Activated B cell treated with CpG ODN at 0.5 μM for 24 hours (primary cell): ENCODE measurements at regions of chr9 and their contacts with region 1.

Region 1: GRCh38 chr9:128361986-128362646 is 9.1 kb upstream of the URM1 start:
- DNase-seq: peak; percentile 48
- ATAC-seq: peak; percentile 92
- H3K4me3 Mint-ChIP-seq: peak overlapping the region; percentile 80
- H3K27ac Mint-ChIP-seq: no peak overlapping the region
- H3K4me1 Mint-ChIP-seq: peaks cover 13% of the 10 kb centered on the region
- H3K27me3 Mint-ChIP-seq: no peaks in the 10 kb centered on the region
- CTCF ChIP-seq: peak; percentile 70

Region 2: DNA sequence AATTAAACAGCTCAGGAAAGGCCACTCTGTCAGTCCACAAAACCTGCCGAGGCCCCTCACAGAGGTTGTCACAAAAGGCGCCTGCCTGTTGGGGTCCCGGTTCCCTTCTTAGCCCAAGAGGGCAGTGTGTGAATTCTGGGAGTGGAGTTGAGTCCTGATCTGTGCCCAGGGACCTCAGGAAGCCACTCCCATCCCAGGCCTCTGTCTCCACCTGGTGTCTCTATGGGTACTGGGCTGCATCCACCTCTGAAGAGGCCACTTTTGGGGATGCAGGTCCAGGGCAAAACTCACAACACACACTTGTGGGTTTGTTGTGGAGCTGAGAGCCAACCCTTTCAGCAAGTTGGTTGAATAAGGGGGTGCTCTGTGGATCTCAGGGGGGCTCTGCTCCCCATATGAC is 824.3 kb before region 1 on chr9:
- CTCF ChIA-PET with region 1: no interaction called
- POLR2A ChIA-PET with region 1: no interaction called
- intact Hi-C with region 1: no loop called
- DNase-seq: no peak
- ATAC-seq: no peak
- H3K4me3 Mint-ChIP-seq: no peak overlapping the region
- H3K27ac Mint-ChIP-seq: no peak overlapping the region
- H3K4me1 Mint-ChIP-seq: no peaks in the 10 kb centered on the region
- H3K27me3 Mint-ChIP-seq: no peaks in the 10 kb centered on the region
- CTCF ChIP-seq: no peak

Region 3: DNA sequence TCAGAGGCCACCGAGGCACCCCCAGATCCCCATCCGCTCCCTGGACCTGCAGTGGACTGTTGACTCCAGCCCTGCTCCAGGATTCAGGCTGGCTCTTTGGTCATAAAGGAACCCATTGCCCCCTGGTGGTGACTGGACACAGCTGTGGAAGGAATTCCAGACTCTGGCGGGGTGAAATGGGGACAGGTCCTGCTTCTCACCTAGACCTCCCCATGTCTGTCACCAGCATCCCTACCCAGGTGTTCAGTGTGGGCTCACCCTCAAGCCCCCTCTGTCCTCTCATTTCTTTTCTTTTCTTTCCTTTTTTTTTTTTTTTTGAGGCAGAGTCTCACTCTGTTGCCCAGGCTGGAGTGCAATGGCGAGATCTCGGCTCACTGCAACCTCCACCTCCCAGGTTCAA is 775.6 kb before region 1 on chr9:
- CTCF ChIA-PET with region 1: no interaction called
- POLR2A ChIA-PET with region 1: interaction called, 10 read pairs
- intact Hi-C with region 1: no loop called
- DNase-seq: no peak
- ATAC-seq: peak; percentile 64
- H3K4me3 Mint-ChIP-seq: no peak overlapping the region
- H3K27ac Mint-ChIP-seq: no peak overlapping the region
- H3K4me1 Mint-ChIP-seq: no peaks in the 10 kb centered on the region
- H3K27me3 Mint-ChIP-seq: peaks cover 24% of the 10 kb centered on the region
- CTCF ChIP-seq: no peak

Region 4: GRCh38 chr9:128296337-128297220 is 65.5 kb before region 1 on chr9:
- CTCF ChIA-PET with region 1: interaction called, 4 read pairs
- POLR2A ChIA-PET with region 1: no interaction called
- intact Hi-C with region 1: loop called (anchors 5 kb)
- DNase-seq: no peak
- ATAC-seq: no peak
- H3K4me3 Mint-ChIP-seq: no peak overlapping the region
- H3K27ac Mint-ChIP-seq: no peak overlapping the region
- H3K4me1 Mint-ChIP-seq: no peaks in the 10 kb centered on the region
- H3K27me3 Mint-ChIP-seq: no peaks in the 10 kb centered on the region
- CTCF ChIP-seq: no peak

Region 5: DNA sequence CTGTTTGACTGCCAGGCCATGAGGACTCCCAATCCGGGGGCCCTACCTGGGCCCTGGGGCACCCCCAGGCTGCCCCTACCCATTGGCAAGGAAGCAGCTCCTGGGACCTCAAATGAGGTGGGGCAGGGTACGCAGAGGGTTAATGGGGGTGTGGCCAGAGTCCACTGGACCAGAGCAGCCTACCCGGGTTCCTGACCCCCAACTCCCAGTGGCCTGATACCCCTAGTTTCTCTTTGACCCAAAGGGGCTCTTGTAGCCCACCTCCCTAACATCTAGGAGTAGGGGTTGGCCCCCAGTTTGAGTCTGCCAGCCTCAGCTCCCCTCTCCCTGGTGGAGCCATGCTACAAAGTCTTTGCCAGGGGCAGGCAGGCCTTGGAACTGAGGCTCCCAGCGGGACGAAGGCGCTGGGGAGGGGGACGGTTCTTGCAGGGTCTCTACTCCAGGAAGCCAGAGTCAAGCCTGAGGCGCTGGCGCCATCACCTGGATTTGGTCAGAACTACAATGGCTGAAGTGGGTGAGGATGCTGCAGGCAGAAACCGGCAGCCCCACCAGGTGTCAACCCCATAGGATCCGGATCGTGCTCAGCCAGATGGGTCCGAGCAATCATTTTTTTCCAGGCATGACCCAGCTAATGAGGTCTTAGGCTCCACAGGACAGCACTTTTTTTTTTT is 50.1 kb after region 1 on chr9:
- CTCF ChIA-PET with region 1: interaction called, 3 read pairs
- POLR2A ChIA-PET with region 1: no interaction called
- intact Hi-C with region 1: loop called (anchors 1 kb)
- DNase-seq: peak; percentile 27
- ATAC-seq: no peak
- H3K4me3 Mint-ChIP-seq: no peak overlapping the region
- H3K27ac Mint-ChIP-seq: no peak overlapping the region
- H3K4me1 Mint-ChIP-seq: no peaks in the 10 kb centered on the region
- H3K27me3 Mint-ChIP-seq: peaks cover 33% of the 10 kb centered on the region
- CTCF ChIP-seq: no peak

Region 6: DNA sequence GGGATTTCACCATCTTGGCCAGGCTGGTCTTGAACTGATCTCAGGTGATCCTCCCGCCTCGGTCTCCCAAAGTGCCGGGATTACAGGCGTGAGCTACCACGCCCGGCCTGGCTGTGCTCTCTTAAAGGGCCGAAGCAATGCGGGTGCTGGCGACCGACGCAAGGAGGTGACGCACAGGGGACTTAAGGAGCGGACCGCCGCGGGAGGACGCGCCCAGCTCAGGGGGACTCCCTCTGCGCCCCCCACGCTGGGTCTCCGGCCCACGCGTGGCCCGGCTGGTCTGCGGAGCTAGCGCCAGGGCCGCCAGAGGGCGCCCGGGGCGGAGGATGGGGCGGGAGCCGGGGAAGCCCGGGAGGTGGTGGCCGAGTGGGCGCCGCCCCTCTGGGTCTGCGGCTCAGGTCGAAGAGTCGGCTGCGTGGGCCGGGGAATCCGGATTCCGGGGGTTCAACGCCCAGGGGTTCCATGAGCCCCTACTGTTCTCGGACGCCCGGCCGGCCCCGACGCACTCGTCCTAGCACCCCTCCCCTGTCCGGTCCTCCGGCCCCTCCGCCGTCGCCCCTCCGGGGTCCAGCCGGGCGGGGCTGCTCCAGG is 58.0 kb after region 1 on chr9:
- CTCF ChIA-PET with region 1: interaction called, 20 read pairs
- POLR2A ChIA-PET with region 1: no interaction called
- intact Hi-C with region 1: no loop called
- DNase-seq: peak; percentile 81
- ATAC-seq: peak; percentile 89
- H3K4me3 Mint-ChIP-seq: peak overlapping the region; percentile 75
- H3K27ac Mint-ChIP-seq: no peak overlapping the region
- H3K4me1 Mint-ChIP-seq: peaks cover 8% of the 10 kb centered on the region
- H3K27me3 Mint-ChIP-seq: peaks cover 19% of the 10 kb centered on the region
- CTCF ChIP-seq: no peak

Region 7: GRCh38 chr9:128479262-128479661 is 117.1 kb after region 1 on chr9:
- CTCF ChIA-PET with region 1: no interaction called
- POLR2A ChIA-PET with region 1: no interaction called
- intact Hi-C with region 1: no loop called
- DNase-seq: no peak
- ATAC-seq: no peak
- H3K4me3 Mint-ChIP-seq: no peak overlapping the region
- H3K27ac Mint-ChIP-seq: no peak overlapping the region
- H3K4me1 Mint-ChIP-seq: no peaks in the 10 kb centered on the region
- H3K27me3 Mint-ChIP-seq: no peaks in the 10 kb centered on the region
- CTCF ChIP-seq: no peak